Activated CD4-positive, alpha-beta T cell treated with anti-CD3 and anti-CD28 coated beads, Interleukin-2, amount 10 ng/mL, durations not matched to agents 7 days and 5 days (primary cell): ENCODE measurements at regions of chr2 and their contacts with region 1.

Region 1: DNA sequence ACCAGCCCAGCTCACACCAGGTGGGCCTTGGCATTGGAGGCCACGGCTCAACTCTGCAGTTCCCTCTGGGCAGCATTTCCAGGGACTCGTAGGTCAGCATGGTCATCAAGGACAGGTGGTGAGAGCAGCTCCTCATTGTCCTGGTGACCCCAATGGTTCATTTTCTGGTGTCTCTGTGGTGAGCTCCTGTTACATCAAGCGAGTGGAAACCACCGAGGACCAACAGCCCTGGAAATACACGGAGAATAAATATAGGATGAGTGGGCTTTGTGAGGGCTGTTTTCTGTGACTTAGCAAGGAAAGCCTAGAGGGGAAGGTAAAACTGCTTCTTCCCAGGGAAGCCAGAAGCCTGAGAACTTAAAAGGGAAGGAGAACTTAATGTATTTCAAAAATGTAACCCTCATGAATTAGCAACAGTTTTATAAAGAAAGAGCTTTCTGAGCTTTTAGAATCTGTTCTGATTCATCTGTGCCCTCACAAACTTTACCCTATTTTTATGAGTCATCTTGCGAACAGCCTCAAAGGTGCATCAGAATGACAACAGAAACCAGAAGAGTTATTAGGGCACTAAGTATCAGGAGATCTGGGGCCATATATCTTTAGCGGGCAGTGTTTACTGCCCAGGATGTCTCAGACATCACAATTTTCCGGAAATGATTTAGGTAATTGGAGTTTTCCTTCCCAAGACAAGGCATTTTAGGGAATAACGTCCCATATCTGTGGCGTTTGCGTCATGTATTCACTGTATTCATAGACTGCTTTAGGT is 18.7 kb downstream of the C2orf92 start:
- DNase-seq: no peak
- H3K4me3 Mint-ChIP-seq: no peak overlapping the region
- H3K27ac Mint-ChIP-seq: no peak overlapping the region
- H3K4me1 Mint-ChIP-seq: peaks cover 21% of the 10 kb centered on the region
- H3K27me3 Mint-ChIP-seq: no peaks in the 10 kb centered on the region

Region 2: GRCh38 chr2:97675430-97676113 is 12.7 kb before region 1 on chr2:
- CTCF ChIA-PET with region 1: interaction called, 7 read pairs
- POLR2A ChIA-PET with region 1: interaction called, 10 read pairs
- DNase-seq: no peak
- H3K4me3 Mint-ChIP-seq: no peak overlapping the region
- H3K27ac Mint-ChIP-seq: no peak overlapping the region
- H3K4me1 Mint-ChIP-seq: peaks cover 18% of the 10 kb centered on the region
- H3K27me3 Mint-ChIP-seq: no peaks in the 10 kb centered on the region

Region 3: DNA sequence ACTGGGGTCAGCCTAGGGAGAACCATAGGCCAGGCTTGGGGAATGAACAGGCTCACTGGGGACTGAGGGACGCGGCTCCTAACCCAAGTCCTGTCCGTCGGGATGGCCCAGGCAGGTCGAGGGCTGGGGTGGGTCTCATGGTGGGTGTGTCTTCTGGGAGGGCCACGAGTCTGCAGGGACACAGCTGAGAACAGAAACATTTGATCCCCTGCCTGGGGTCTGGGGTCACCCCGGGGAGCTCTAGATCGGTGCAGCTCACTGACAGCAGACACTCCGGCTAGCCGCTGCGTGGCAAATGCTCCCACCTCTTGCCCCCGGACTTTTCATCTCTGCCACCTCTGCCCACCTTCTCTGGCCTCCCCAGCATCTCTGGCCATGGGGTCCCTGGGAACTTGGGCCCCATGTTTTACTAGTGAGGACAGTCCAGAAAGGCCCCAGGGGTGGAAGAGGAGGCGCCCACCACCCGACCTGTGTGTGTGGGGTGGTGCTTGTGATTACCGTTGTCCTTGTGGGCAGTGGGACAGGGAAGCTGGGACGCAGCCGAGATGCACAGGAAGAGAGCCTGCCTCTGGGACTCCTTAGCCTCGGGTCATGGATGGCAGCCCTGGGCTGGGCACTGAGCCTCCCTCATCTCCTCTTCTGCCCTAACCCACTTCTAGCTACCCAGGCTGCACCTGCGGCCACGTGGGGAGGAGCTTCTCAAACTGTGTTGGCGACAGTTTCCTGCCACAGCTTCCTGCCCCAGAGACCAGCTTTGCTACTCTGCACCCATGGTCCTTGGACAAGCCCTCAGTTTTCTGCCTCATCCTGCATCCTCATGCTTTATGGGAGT is 30.0 kb after region 1 on chr2:
- CTCF ChIA-PET with region 1: no interaction called
- POLR2A ChIA-PET with region 1: no interaction called
- DNase-seq: peak; percentile 86
- H3K4me3 Mint-ChIP-seq: peak overlapping the region; percentile 95
- H3K27ac Mint-ChIP-seq: peak overlapping the region; percentile 92
- H3K4me1 Mint-ChIP-seq: peaks cover 77% of the 10 kb centered on the region
- H3K27me3 Mint-ChIP-seq: no peaks in the 10 kb centered on the region

Region 4: DNA sequence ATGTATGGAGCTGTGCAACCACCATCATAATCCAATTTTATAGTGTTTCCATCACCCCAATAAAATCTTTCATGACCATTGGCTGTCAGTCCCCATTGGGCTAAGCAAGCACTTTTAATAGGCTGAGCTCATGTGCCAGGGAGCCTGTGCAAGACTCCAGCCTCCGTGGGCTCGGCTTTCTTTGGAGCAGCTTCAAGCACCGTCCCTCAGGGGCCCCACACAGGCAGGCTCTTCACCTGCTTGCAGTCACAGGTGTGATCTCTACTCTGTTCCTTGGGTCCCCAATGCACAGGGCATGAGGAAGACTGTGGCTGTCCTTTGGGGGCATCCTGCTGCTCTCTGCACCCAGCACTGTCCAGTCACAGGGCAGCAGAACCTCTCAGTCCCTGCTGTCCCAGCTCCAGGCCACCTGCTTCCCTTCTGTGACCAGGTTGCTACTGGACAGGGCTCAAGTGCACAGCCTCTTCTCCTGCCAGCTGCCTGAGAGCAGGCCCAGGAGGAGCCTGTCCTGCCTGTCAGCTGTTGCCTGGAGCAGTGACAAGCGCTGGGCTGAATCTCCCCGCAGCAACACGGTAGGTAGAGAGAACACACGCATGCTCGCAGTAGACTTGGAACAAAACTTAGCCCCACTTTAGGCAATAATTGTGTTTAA is 348.2 kb after region 1 on chr2:
- CTCF ChIA-PET with region 1: no interaction called
- POLR2A ChIA-PET with region 1: no interaction called
- DNase-seq: no peak
- H3K4me3 Mint-ChIP-seq: no peak overlapping the region
- H3K27ac Mint-ChIP-seq: no peak overlapping the region
- H3K4me1 Mint-ChIP-seq: no peaks in the 10 kb centered on the region
- H3K27me3 Mint-ChIP-seq: no peaks in the 10 kb centered on the region